Activated CD8-positive, alpha-beta T cell treated with anti-CD3 and anti-CD28 coated beads, Interleukin-2, amount 10 ng/mL, durations not matched to agents 7 days and 5 days (primary cell): ENCODE measurements at regions of chr2 and their contacts with region 1.

Region 1: GRCh38 chr2:144240587-144241339 is 279.2 kb downstream of the ZEB2 start:
- DNase-seq: no peak
- ATAC-seq: peak; percentile 57
- H3K4me3 Mint-ChIP-seq: peak overlapping the region; percentile 3
- H3K27ac Mint-ChIP-seq: peak overlapping the region; percentile 83
- H3K4me1 Mint-ChIP-seq: peaks cover 47% of the 10 kb centered on the region
- H3K27me3 Mint-ChIP-seq: no peaks in the 10 kb centered on the region

Region 2: GRCh38 chr2:144252694-144253093 is 11.9 kb after region 1 on chr2:
- CTCF ChIA-PET with region 1: interaction called, 13 read pairs
- POLR2A ChIA-PET with region 1: interaction called, 3 read pairs
- DNase-seq: no peak
- ATAC-seq: no peak
- H3K4me3 Mint-ChIP-seq: no peak overlapping the region
- H3K27ac Mint-ChIP-seq: no peak overlapping the region
- H3K4me1 Mint-ChIP-seq: peaks cover 26% of the 10 kb centered on the region
- H3K27me3 Mint-ChIP-seq: no peaks in the 10 kb centered on the region